ENCODE measurements at regions of chr7 and their contacts with region 1.

Region 1: DNA sequence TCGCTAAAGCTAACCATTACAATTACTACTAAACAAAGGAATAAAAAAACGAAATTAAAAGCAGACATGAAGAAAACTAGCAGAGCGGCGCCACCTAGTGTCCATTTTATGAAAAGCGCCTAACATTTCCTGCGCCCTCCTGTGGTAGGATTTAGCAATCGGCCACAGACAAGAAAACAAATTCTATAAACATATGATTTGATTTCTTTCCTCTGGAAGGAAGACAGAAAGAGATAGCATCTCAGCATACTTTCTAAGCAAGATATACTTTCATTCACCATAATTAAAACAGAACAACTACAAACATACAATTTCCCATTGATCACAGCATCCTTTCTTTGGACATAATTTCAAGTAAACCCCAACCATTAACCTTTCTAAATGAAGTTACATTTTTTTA is 337.7 kb upstream of the NPVF start:
- DNase-seq: peak; percentile 88
- H3K4me3 ChIP-seq: no peak overlapping the region
- H3K27ac ChIP-seq: no peak overlapping the region
- H3K4me1 ChIP-seq: no peaks in the 10 kb centered on the region
- H3K27me3 ChIP-seq: no peaks in the 10 kb centered on the region
- CTCF ChIP-seq: peak; percentile 99
- POLR2A ChIP-seq: no peak

Region 2: DNA sequence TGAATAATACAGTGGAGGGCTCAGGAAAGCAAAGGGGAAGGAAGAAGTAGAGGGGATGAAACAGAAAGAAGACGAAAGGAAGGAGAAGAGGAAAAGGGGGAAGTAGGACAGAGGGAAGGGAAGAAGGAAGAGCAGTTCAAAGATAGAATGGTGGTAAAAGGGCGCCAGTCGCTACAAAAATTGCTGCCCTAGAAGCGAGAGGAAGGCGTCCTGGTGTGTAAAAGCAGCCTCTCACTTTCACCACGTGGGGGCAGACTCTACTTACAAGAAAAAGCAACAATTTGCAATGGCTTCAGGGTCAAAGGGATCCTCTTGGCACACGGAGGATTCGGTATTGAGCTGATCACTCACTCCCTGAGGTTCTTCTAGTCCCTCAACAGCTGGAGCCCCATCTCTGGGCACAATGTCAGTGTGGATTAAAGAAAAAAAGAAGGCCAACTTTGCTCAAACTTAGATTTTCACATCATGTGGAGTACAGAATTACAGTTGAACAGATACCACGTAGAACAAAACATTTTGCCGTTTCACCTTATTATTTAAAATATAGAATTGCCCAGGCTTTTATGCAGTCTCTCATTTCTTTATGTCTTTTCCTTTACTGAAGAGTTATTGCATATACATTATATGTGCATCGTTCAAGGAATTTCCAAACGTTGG is 306.2 kb before region 1 on chr7:
- CTCF ChIA-PET with region 1: interaction called, 137 read pairs
- POLR2A ChIA-PET with region 1: no interaction called
- dilution Hi-C with region 1: no loop called
- intact Hi-C with region 1: loop called (anchors 1 kb)
- DNase-seq: peak; percentile 61
- H3K4me3 ChIP-seq: no peak overlapping the region
- H3K27ac ChIP-seq: no peak overlapping the region
- H3K4me1 ChIP-seq: no peaks in the 10 kb centered on the region
- H3K27me3 ChIP-seq: no peaks in the 10 kb centered on the region
- CTCF ChIP-seq: peak; percentile 77 to 82
- POLR2A ChIP-seq: no peak

Region 3: GRCh38 chr7:25389489-25390106 is 176.4 kb before region 1 on chr7:
- CTCF ChIA-PET with region 1: interaction called, 74 read pairs
- POLR2A ChIA-PET with region 1: no interaction called
- dilution Hi-C with region 1: no loop called
- intact Hi-C with region 1: loop called (anchors 1 kb)
- DNase-seq: peak; percentile 44
- H3K4me3 ChIP-seq: no peak overlapping the region
- H3K27ac ChIP-seq: no peak overlapping the region
- H3K4me1 ChIP-seq: no peaks in the 10 kb centered on the region
- H3K27me3 ChIP-seq: peaks cover 2 to 3% of the 10 kb centered on the region in 2 experiments
- CTCF ChIP-seq: peak; percentile 23 to 40
- POLR2A ChIP-seq: no peak

Region 4: DNA sequence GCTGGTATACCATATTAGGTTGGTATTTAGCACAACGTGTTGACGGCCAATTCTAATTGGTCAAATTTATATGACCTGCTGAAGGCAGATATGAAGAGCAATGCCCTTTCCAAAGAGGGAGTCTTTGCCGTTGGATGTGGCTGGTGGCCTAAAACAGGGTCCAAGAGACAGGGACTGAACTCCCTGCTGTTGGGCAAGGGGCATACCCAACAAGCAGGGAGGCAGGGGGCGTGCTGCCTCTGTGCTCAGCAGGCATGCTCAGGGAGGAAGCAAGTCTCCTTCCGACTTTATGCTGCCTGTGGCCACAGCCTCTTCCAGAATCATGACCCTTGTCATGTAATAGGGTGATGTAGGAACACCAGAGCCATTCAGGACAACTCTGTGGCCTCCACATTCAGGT is 170.0 kb before region 1 on chr7:
- CTCF ChIA-PET with region 1: interaction called, 74 read pairs
- POLR2A ChIA-PET with region 1: no interaction called
- dilution Hi-C with region 1: no loop called
- intact Hi-C with region 1: loop called (anchors 1 kb)
- DNase-seq: no peak
- H3K4me3 ChIP-seq: no peak overlapping the region
- H3K27ac ChIP-seq: no peak overlapping the region
- H3K4me1 ChIP-seq: no peaks in the 10 kb centered on the region
- H3K27me3 ChIP-seq: no peaks in the 10 kb centered on the region
- CTCF ChIP-seq: no peak
- POLR2A ChIP-seq: no peak

Region 5: GRCh38 chr7:25578991-25579777 is 13.2 kb after region 1 on chr7:
- CTCF ChIA-PET with region 1: interaction called, 21 read pairs
- POLR2A ChIA-PET with region 1: no interaction called
- dilution Hi-C with region 1: no loop called
- intact Hi-C with region 1: no loop called
- DNase-seq: no peak
- H3K4me3 ChIP-seq: no peak overlapping the region
- H3K27ac ChIP-seq: no peak overlapping the region
- H3K4me1 ChIP-seq: no peaks in the 10 kb centered on the region
- H3K27me3 ChIP-seq: no peaks in the 10 kb centered on the region
- CTCF ChIP-seq: no peak
- POLR2A ChIP-seq: no peak

Region 6: DNA sequence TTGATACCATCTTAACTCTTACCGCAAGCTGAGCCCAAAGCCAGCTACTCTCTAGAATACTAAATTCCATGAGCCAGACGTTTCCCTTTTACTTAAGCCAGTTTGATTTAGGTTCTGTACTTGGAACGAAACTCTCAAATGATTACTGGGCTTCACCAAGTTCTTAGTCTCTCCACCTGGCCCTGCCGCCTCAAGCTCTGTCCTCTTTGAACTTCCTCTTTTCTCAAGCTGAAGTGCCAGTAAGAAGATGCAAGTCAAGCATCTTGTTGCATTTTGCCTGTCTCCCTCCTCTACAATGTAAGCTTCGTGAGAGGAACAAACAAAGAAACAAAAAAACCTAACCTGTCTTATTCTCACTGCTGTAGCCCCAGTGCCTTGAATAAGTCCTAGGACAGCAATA is 20.6 kb after region 1 on chr7:
- CTCF ChIA-PET with region 1: interaction called, 25 read pairs
- POLR2A ChIA-PET with region 1: no interaction called
- dilution Hi-C with region 1: no loop called
- intact Hi-C with region 1: no loop called
- DNase-seq: no peak
- H3K4me3 ChIP-seq: no peak overlapping the region
- H3K27ac ChIP-seq: no peak overlapping the region
- H3K4me1 ChIP-seq: no peaks in the 10 kb centered on the region
- H3K27me3 ChIP-seq: no peaks in the 10 kb centered on the region
- CTCF ChIP-seq: no peak
- POLR2A ChIP-seq: no peak

Region 7: GRCh38 chr7:25731068-25731845 is 165.3 kb after region 1 on chr7:
- CTCF ChIA-PET with region 1: no interaction called
- POLR2A ChIA-PET with region 1: no interaction called
- dilution Hi-C with region 1: no loop called
- intact Hi-C with region 1: no loop called
- DNase-seq: no peak
- H3K4me3 ChIP-seq: no peak overlapping the region
- H3K27ac ChIP-seq: no peak overlapping the region
- H3K4me1 ChIP-seq: no peaks in the 10 kb centered on the region
- H3K27me3 ChIP-seq: no peaks in the 10 kb centered on the region
- CTCF ChIP-seq: no peak
- POLR2A ChIP-seq: no peak

Region 8: GRCh38 chr7:25742316-25742715 is 176.4 kb after region 1 on chr7:
- CTCF ChIA-PET with region 1: no interaction called
- POLR2A ChIA-PET with region 1: no interaction called
- dilution Hi-C with region 1: no loop called
- intact Hi-C with region 1: no loop called
- DNase-seq: no peak
- H3K4me3 ChIP-seq: no peak overlapping the region
- H3K27ac ChIP-seq: no peak overlapping the region
- H3K4me1 ChIP-seq: no peaks in the 10 kb centered on the region
- H3K27me3 ChIP-seq: no peaks in the 10 kb centered on the region
- CTCF ChIP-seq: no peak
- POLR2A ChIP-seq: no peak

Region 9: GRCh38 chr7:25851332-25852210 is 285.6 kb after region 1 on chr7:
- CTCF ChIA-PET with region 1: interaction called, 17 read pairs
- POLR2A ChIA-PET with region 1: no interaction called
- dilution Hi-C with region 1: no loop called
- intact Hi-C with region 1: loop called (anchors 1 kb)
- DNase-seq: peak; percentile 79
- H3K4me3 ChIP-seq: no peak overlapping the region
- H3K27ac ChIP-seq: no peak overlapping the region
- H3K4me1 ChIP-seq: peaks cover 30% of the 10 kb centered on the region
- H3K27me3 ChIP-seq: peaks cover 9 to 11% of the 10 kb centered on the region in 2 experiments
- CTCF ChIP-seq: peak; percentile 77 to 87
- POLR2A ChIP-seq: no peak

Measured in endothelial cell of umbilical vein (primary cell).